ENCODE measurements at regions of chr12 and their contacts with region 1.

Region 1: DNA sequence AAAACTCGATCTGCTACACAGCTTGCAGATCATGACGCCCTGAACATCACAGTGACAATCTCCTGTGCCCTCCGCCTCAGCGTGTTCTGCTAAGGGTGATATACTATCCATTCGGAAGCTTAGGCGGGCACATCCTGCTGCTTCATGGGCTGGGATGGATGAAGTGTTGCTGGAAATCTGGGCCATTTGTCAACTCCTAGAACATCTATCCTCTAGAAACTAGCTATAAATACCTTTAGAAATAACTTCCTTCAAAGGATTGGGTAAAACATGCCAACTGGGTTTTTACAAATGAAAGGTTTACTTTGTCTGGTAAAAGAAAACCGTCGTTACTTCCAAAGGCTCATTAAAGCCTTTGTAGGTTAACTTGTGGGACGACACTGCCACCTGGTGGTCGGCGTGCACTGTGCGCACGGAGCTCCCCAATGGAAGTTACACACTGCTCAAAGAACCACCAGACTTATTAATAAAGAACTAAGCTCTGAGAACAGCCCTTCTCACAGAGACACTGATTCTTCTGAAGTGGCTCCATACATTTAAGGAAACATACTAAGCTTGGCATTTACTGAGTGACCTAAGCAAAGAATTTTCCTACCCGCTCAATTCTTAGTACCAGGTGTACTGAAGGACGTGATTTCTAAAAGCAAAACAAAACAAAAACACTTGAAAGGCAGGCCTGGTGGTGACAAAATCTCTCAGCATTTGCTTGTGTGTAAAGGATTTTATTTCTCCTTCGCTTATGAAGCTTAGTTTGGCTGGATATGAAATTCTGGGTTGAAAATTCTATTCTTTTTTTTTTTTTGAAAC is 21.6 kb upstream of the CACNA2D4 start:
- DNase-seq: peak; percentile 85
- ATAC-seq: peak; percentile 78

Region 2: DNA sequence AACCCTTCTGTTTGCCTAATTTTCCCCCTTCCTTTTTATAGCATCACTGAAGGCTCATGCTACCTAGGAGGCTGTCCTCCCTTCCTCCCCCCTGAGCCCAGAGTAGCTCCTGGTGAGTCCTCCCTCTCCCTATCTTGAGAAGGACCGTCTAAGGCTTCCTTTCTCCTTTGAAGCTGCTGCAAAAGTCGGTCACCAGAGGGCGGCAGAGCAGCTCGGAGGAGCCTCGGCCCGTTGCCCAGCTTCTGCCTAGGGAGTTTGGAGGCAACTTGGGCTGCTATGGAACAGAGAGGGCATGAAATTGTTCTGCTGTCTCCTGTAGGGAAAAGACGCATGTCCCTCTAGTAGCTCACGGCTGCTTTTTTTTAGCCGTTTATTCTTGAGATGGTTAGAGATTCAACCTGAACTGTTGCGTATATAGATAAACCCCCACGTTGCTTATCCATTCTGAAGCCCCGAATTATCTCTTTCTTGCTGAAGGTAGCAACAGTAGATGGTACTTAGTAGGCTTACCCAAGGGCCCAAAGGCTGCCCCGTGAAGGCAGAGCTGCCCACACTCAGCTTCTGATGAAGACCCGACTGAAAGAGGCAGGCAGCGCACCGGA is 305.3 kb before region 1 on chr12:
- intact Hi-C with region 1: loop called in 1 of 2 experiments (anchors 5 kb)
- DNase-seq: peak; percentile 88
- ATAC-seq: peak; percentile 64

Region 3: DNA sequence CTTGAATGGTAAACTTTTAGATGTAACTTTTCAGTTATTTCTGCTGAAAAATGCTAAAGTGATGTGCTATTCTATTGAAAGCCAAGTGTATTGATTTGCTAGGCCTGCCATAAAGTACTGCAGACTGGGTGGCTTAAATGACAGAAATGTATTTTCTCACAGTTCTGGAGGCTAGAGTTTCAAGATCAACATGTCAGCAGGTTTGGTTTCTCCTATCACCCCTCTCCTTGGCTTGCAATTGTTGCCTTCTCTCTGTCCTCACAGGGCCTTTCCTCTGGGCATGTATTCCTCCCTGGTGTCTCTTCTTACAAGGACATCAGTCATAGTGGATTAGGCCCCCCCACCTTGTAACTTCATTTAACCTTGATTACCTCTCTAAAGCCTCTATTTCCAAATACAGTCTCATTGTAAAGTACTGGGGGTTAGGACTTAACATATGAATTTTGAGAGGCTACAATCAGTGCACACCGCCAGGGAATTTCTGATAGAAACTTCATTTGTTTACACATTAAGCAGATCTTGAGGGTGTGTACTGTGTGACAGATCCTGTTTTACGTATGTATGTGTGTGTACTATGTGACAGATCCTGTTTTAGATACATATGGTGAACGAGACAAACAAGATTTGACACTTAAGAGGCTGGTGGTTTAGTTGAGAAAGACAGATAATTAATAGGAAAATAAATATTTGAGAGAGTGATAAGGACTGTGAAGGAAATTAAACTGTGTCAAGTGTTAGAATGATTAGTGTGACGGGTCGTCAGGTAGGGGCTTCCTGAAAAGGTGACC is 199.6 kb before region 1 on chr12:
- intact Hi-C with region 1: no loop called
- DNase-seq: no peak
- ATAC-seq: no peak

Region 4: GRCh38 chr12:1795785-1796514 is 144.1 kb before region 1 on chr12:
- intact Hi-C with region 1: loop called (anchors 1 to 2 kb)
- DNase-seq: peak; percentile 96
- ATAC-seq: peak; percentile 95 to 97